ENCODE measurements at regions of chr1 and their contacts with region 1.

Region 1: DNA sequence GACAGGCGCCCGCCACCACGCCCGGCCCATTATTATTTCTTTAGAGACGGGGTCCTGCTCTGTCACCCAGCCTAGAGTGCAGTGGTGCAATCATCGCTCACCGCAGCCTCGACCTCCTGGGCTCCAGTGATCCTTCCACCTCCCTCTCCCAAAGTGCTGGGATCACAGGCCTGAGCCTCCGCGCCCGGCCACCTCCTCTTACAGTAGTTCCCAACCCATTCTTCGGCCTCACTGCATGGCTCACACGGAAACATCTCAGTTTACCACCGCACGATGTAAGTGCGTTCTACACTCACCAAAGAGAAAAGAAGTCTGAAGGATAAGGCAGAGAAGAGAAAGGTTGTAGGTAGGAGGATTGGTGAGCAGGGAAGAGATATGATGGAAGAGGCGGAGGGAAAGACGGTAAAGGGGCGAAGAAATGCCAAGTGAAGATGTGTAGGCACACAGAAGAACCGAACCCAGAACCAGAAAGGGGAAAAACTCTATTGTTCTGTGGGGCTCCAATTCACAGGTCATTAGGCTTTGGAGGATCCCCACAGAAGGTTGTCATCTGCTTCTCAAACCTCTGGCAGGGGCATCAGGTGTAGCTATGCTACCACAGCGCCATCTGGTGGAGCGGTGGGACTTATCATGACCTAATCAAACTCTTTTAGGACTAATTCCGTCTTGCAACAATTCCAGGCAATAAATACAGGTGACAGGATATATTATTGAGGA is 504.2 kb downstream of the SMYD3 start:
- DNase-seq: peak; percentile 81 to 86
- H3K4me3 ChIP-seq: no peak overlapping the region
- H3K4me3 Mint-ChIP-seq: no peak overlapping the region
- H3K27ac Mint-ChIP-seq: no peak overlapping the region
- H3K4me1 ChIP-seq: peaks cover 8% of the 10 kb centered on the region
- H3K4me1 Mint-ChIP-seq: peaks cover 22% of the 10 kb centered on the region
- H3K27me3 ChIP-seq: no peaks in the 10 kb centered on the region
- H3K27me3 Mint-ChIP-seq: no peaks in the 10 kb centered on the region
- CTCF ChIP-seq: peak; percentile 86 to 91

Region 2: DNA sequence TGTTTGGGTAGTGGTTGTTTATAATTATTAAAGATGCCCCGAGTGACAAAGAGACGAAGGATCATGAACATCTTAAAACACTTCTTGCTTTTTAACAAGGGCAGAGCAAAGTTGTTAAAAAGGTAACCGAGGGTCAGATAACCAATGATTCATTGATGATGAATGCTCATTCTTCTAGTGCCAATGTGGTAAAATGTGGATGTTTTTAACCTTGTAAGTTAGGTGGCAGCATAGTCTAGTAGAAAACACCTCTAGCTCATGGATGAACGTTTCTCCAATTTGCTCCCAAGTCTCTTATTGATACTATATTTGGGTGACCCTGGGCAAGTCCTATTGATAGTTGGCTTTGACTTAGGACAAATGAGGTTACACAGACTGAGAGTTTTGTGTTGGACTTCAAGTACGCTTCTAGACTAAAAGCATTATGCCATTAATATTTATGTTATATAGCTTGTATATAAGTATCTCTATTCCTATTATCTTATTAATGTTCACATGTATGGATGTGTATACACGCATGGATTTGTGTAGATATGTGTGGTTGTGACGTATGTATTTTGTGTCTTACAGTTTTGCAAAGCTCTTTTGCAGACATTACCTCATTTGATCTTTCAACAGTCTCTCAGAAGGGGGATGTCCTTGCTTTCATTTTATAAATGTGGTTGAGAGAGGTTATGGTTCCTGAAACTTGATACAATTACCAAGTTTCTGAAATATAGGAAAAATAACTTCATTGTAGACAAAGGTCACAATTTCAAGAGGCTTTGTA is 680.0 kb before region 1 on chr1:
- CTCF ChIA-PET with region 1: interaction called, 3 read pairs
- POLR2A ChIA-PET with region 1: no interaction called
- intact Hi-C with region 1: loop called (anchors 1 kb)
- DNase-seq: no peak
- H3K4me3 ChIP-seq: no peak overlapping the region
- H3K4me3 Mint-ChIP-seq: no peak overlapping the region
- H3K27ac Mint-ChIP-seq: no peak overlapping the region
- H3K4me1 ChIP-seq: no peaks in the 10 kb centered on the region; the same call in 1 of the 2 replicates
- H3K4me1 Mint-ChIP-seq: peaks cover 4% of the 10 kb centered on the region
- H3K27me3 ChIP-seq: no peaks in the 10 kb centered on the region
- H3K27me3 Mint-ChIP-seq: no peaks in the 10 kb centered on the region
- CTCF ChIP-seq: peak in 1 of 2 experiments; percentile 24

Region 3: GRCh38 chr1:245614476-245614875 is 388.4 kb before region 1 on chr1:
- CTCF ChIA-PET with region 1: no interaction called
- POLR2A ChIA-PET with region 1: no interaction called
- intact Hi-C with region 1: loop called (anchors 10 kb)
- DNase-seq: no peak
- H3K4me3 ChIP-seq: no peak overlapping the region
- H3K4me3 Mint-ChIP-seq: no peak overlapping the region
- H3K27ac Mint-ChIP-seq: no peak overlapping the region
- H3K4me1 ChIP-seq: peaks cover 35% of the 10 kb centered on the region
- H3K4me1 Mint-ChIP-seq: peaks cover 25% of the 10 kb centered on the region
- H3K27me3 ChIP-seq: no peaks in the 10 kb centered on the region
- H3K27me3 Mint-ChIP-seq: no peaks in the 10 kb centered on the region
- CTCF ChIP-seq: no peak

Region 4: DNA sequence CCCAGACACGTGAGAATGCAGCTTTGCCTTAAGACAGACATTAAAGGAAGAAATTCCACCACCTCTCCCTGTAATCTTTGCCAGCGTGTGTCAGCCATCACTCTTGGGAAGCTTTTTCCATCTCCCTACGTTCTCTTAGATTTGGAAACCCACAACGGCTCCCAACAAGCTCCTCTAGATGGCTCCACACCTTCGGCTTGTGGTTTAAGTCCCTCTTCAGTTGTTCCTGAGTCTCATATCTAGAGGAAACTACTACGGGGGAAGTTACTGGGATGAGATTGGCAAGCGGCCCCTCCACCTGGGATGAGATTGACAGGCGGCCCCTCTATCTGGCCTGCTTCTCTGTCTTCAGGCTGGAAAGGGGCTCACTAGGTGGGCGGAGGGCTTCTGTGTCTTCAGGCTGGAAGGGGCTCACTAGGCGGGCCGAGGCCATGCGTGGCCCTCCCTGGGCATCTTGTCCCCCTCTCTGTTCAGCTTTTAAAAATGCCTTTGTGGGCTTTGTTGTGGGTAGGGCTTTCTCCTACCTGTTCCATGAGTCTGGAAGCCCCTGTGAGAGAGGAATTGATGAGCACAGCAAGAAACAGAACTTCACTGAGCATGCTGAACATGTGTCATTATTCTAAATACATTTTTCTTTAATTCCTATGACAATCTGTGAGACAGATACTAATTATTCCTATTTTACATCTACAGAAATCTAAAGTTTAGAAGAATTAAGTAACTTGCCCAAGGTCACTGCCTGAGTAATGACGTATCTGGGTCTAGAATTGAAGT is 177.6 kb before region 1 on chr1:
- CTCF ChIA-PET with region 1: no interaction called
- POLR2A ChIA-PET with region 1: no interaction called
- intact Hi-C with region 1: loop called (anchors 1 kb)
- DNase-seq: no peak
- H3K4me3 ChIP-seq: no peak overlapping the region
- H3K4me3 Mint-ChIP-seq: no peak overlapping the region
- H3K27ac Mint-ChIP-seq: no peak overlapping the region
- H3K4me1 ChIP-seq: peaks cover 14% of the 10 kb centered on the region
- H3K4me1 Mint-ChIP-seq: peaks cover 13% of the 10 kb centered on the region
- H3K27me3 ChIP-seq: no peaks in the 10 kb centered on the region
- H3K27me3 Mint-ChIP-seq: no peaks in the 10 kb centered on the region
- CTCF ChIP-seq: no peak

Region 5: DNA sequence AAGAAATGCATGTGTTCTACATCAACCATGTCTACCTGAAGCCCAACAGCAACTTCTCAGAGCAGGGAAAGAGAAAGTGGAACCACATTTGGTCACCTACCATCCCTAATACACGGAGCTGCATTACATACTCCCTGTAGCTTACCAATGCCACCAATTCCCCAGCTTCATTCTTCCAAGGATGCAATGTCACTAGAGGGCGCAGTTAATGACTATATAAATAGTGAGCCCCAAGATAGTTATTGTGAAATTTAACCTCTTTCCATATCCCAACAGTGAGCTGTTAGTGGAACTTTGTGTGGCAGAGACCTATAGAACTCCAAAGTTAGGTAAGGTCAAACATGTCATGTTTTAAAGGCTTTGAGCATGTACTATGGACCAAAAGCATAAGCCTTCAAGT is 114.1 kb before region 1 on chr1:
- CTCF ChIA-PET with region 1: interaction called, 8 read pairs
- POLR2A ChIA-PET with region 1: no interaction called
- intact Hi-C with region 1: loop called (anchors 2 kb)
- DNase-seq: peak in 1 of 2 experiments; percentile 39
- H3K4me3 ChIP-seq: no peak overlapping the region
- H3K4me3 Mint-ChIP-seq: no peak overlapping the region
- H3K27ac Mint-ChIP-seq: no peak overlapping the region
- H3K4me1 ChIP-seq: no peaks in the 10 kb centered on the region
- H3K4me1 Mint-ChIP-seq: no peaks in the 10 kb centered on the region
- H3K27me3 ChIP-seq: no peaks in the 10 kb centered on the region
- H3K27me3 Mint-ChIP-seq: no peaks in the 10 kb centered on the region
- CTCF ChIP-seq: peak; percentile 10 to 51

Region 6: GRCh38 chr1:245978915-245979314 is 24.0 kb before region 1 on chr1:
- CTCF ChIA-PET with region 1: no interaction called
- POLR2A ChIA-PET with region 1: no interaction called
- intact Hi-C with region 1: no loop called
- DNase-seq: no peak
- H3K4me3 ChIP-seq: no peak overlapping the region
- H3K4me3 Mint-ChIP-seq: no peak overlapping the region
- H3K27ac Mint-ChIP-seq: no peak overlapping the region
- H3K4me1 ChIP-seq: no peaks in the 10 kb centered on the region
- H3K4me1 Mint-ChIP-seq: no peaks in the 10 kb centered on the region
- H3K27me3 ChIP-seq: no peaks in the 10 kb centered on the region
- H3K27me3 Mint-ChIP-seq: no peaks in the 10 kb centered on the region
- CTCF ChIP-seq: no peak

Measured in Caco-2 (cell line).